Activated CD8-positive, alpha-beta T cell treated with anti-CD3 and anti-CD28 coated beads for 36 hours (primary cell): ENCODE measurements at regions of chr1 and their contacts with region 1.

Region 1: DNA sequence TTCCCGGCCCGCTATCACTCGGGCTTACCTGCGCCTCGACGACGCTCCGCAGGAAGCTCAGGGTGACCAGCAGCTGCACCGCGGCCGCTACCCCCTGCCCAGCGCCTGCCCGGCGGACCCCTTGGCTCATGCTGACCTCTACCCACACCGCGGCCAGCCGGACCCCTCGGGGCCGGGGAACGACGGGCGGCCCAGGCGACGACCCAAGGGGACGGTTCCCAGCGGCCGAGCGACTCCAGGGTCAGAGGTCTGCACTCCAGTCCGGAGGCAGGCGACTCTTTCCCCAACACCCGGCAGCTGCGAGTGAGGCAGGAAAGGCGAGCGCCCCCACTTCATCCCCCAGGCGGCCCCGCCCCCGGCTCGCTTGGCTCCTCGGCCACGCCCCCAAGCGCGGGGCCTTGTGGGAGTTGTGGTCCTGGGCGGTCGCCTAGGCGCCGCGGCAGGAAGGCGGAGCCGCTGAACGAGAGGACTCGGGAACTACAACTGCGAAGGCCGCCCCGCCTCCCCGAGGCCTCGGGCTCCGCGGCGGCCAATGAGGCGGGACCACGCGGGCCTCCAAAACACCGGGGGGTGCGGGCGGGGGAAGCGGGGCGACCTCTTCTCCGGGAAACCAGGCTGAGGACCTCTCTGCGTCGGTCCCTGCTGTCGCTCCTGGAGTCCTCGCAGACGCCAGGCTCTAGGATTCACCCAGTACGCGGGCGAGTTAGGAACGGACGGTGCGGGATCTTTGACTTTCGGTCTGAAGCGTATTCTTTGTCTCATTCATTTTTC is at the start of gene ERO1B:
- DNase-seq: peak; percentile 97
- ATAC-seq: peak; percentile 94
- H3K4me3 Mint-ChIP-seq: peak within 1 kb of the TSS; percentile 80
- H3K27ac Mint-ChIP-seq: peak within 1 kb of the TSS; percentile 78
- H3K4me1 Mint-ChIP-seq: peaks cover 43% of the 10 kb centered on the region
- H3K27me3 Mint-ChIP-seq: peaks cover 1% of the 10 kb centered on the region
- CTCF ChIP-seq: no peak
- total RNA-seq, gene ERO1B: 1.9 to 2.0 TPM

Region 2: GRCh38 chr1:236142253-236143103 is 139.4 kb before region 1 on chr1 and contains the start of gene GPR137B:
- CTCF ChIA-PET with region 1: no interaction called
- POLR2A ChIA-PET with region 1: interaction called, 5 read pairs
- intact Hi-C with region 1: loop called (anchors 10 kb)
- DNase-seq: peak; percentile 83
- ATAC-seq: peak; percentile 75
- H3K4me3 Mint-ChIP-seq: peak within 1 kb of the TSS; percentile 92
- H3K27ac Mint-ChIP-seq: peak within 1 kb of the TSS; percentile 88
- H3K4me1 Mint-ChIP-seq: peaks cover 24% of the 10 kb centered on the region
- H3K27me3 Mint-ChIP-seq: peaks cover 26% of the 10 kb centered on the region
- CTCF ChIP-seq: no peak
- total RNA-seq, gene GPR137B: 7.2 to 8.1 TPM

Region 3: GRCh38 chr1:236269439-236269838 is 12.4 kb before region 1 on chr1:
- CTCF ChIA-PET with region 1: no interaction called
- POLR2A ChIA-PET with region 1: no interaction called
- intact Hi-C with region 1: no loop called
- DNase-seq: no peak
- ATAC-seq: no peak
- H3K4me3 Mint-ChIP-seq: no peak overlapping the region
- H3K27ac Mint-ChIP-seq: no peak overlapping the region
- H3K4me1 Mint-ChIP-seq: peaks cover 15% of the 10 kb centered on the region
- H3K27me3 Mint-ChIP-seq: no peaks in the 10 kb centered on the region
- CTCF ChIP-seq: no peak